ENCODE measurements at regions of chr2 and their contacts with region 1.

Region 1: DNA sequence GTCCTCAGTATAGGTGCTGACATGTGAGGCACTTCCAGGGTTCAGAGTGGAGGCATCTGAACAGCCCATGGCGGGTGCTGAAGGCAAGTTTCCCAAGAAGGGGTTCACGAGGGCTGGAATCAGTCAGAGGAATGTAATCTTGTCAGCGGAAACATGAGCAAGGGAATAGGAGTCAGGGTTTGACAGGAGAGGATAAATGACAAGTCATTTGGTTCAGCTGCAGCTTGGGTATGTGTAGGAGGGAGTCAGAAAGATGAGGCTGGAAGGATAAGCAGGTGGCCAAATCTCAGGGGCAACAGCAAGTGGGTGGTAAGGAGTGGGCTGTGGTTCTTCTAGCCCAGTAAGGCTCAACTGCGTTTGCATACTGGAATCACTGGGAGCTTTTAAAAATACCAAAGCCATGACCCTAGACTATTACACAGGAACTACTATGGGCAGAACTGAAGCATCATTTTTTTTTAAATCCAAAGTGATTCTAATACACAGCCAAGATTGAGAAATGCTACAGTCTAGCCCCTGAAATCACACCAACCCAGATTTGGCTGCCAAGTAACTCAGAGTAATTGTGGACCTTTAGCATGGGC is 41.8 kb upstream of the NAB1 start:
- DNase-seq: no peak
- ATAC-seq: peak; percentile 19; the same call in 1 of the 3 replicates
- H3K4me3 ChIP-seq: no peak overlapping the region
- H3K27ac ChIP-seq: no peak overlapping the region
- H3K4me1 ChIP-seq: peaks cover 15% of the 10 kb centered on the region
- H3K27me3 ChIP-seq: no peaks in the 10 kb centered on the region
- CTCF ChIP-seq: no peak
- EP300 ChIP-seq: no peak
- POLR2A ChIP-seq: no peak
- RAD21 ChIP-seq: no peak

Region 2: GRCh38 chr2:190551928-190552327 is 55.2 kb before region 1 on chr2:
- CTCF ChIA-PET with region 1: interaction called, 4 read pairs
- POLR2A ChIA-PET with region 1: no interaction called
- RAD21 ChIA-PET with region 1: interaction called, 4 read pairs
- SMC1A ChIA-PET with region 1: interaction called, 10 read pairs
- in situ Hi-C with region 1: no loop called
- intact Hi-C with region 1: no loop called
- DNase-seq: no peak
- ATAC-seq: peak; percentile 64
- H3K4me3 ChIP-seq: no peak overlapping the region
- H3K27ac ChIP-seq: no peak overlapping the region
- H3K4me1 ChIP-seq: no peaks in the 10 kb centered on the region
- H3K27me3 ChIP-seq: no peaks in the 10 kb centered on the region
- CTCF ChIP-seq: no peak
- EP300 ChIP-seq: no peak
- POLR2A ChIP-seq: no peak
- RAD21 ChIP-seq: no peak

Region 3: DNA sequence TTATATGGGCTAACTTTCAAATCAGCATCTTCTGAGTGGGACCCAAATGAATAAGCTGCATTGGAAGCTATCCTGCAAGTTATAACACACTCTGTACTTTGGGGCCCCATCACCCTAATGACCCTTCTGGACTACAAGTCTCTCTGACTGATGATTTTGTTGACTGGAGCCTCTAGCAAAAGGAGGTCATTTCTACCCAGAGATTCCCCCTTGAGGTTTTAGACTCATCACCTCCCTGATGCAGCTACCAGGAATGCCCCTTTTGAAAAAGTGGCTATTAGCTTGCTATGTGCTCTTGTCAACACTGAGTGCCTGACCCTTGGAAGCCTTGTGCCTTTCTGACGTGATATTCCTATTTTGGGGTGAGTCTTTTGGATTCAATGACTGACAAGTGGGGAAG is 18.1 kb before region 1 on chr2:
- CTCF ChIA-PET with region 1: interaction called, 4 read pairs
- POLR2A ChIA-PET with region 1: interaction called, 7 read pairs
- RAD21 ChIA-PET with region 1: interaction called, 14 read pairs
- SMC1A ChIA-PET with region 1: interaction called, 9 read pairs
- in situ Hi-C with region 1: no loop called
- intact Hi-C with region 1: loop called (anchors 2 kb)
- DNase-seq: no peak
- ATAC-seq: peak; percentile 72
- H3K4me3 ChIP-seq: no peak overlapping the region
- H3K27ac ChIP-seq: no peak overlapping the region
- H3K4me1 ChIP-seq: peaks cover 4% of the 10 kb centered on the region
- H3K27me3 ChIP-seq: no peaks in the 10 kb centered on the region
- CTCF ChIP-seq: no peak
- EP300 ChIP-seq: no peak
- POLR2A ChIP-seq: no peak
- RAD21 ChIP-seq: no peak

Region 4: DNA sequence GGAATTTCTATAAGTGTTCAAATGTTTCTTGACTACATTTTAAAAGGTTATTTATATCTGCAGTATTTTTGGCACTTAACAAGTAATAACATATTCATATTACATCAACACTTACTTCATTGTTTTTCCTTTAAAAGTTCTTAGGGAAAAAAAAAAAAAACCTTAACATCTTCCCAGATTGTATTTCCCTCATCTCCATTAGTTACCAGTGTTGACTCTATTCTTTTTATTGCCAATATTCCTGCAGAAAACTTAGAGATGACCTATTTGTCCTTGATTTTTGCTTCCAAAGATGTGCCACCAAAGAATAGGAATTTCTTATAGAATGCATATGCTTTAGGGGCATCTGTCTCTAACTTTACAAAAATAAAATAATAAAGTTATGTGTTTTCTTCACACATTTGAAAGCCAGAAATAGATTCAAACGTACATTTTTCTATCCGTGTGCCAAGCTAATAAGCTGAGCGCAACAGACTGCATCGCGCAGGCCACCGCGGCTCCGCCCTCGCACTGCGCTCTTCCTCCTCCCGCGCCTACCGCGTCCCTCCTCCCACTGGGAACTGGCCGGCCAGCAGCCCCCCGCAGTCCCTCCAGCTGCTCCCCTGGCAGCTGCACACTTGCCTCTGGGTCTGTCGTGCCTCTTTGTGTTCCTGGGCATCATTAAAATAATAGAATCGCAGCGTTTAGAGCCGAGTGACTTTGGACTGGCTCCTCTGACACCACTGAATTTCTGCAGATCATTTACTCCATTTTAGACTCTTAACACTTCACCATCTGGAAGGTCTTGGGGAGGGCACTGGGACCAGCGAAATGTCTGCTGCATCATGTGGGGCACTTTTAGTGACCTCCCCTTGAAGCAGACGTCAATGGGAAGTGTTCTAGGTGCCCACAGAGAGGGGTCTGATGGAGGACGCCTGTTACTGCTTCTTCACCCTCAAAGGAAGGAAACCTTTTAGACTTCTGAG is 20.6 kb after region 1 on chr2:
- CTCF ChIA-PET with region 1: interaction called, 3 read pairs
- POLR2A ChIA-PET with region 1: no interaction called
- RAD21 ChIA-PET with region 1: no interaction called
- SMC1A ChIA-PET with region 1: interaction called, 13 read pairs
- in situ Hi-C with region 1: no loop called
- intact Hi-C with region 1: no loop called
- DNase-seq: no peak
- ATAC-seq: peak; percentile 90
- H3K4me3 ChIP-seq: peak overlapping the region; percentile 41
- H3K27ac ChIP-seq: no peak overlapping the region
- H3K4me1 ChIP-seq: no peaks in the 10 kb centered on the region
- H3K27me3 ChIP-seq: no peaks in the 10 kb centered on the region
- CTCF ChIP-seq: no peak
- EP300 ChIP-seq: no peak
- POLR2A ChIP-seq: no peak
- RAD21 ChIP-seq: no peak

Measured in GM12878 (cell line).